HepG2 (cell line): ENCODE measurements at regions of chr17 and their contacts with region 1.

Region 1: DNA sequence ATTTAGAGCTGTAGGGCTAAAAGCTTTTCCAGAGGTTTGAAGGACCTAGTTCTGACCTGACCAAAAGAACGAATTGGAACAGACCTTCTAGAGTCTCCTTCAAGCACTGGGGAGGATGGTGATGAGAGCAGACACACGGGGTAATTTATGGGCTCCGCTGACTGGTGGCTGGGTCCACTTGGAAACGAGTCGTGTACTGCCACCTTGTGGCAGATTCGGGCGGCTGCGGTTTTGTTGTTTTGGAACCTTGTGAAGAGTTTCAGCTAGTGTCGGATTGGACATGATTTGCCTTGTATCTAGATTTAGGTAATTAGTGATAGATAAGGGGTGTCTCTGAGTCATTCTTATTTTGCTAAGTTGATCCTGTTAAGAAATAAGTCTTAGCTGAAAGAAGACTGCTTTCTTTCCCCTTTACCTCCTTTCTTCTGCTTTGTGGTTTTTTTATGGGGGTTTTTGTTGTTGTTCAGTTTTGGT is 98.9 kb downstream of the AATF start:
- DNase-seq: peak; percentile 68
- ATAC-seq: peak; percentile 77
- H3K4me3 ChIP-seq: no peak overlapping the region
- H3K27ac ChIP-seq: no peak overlapping the region
- H3K4me1 ChIP-seq: peaks cover 35% of the 10 kb centered on the region
- H3K27me3 ChIP-seq: no peaks in the 10 kb centered on the region
- CTCF ChIP-seq: peak; percentile 86
- EP300 ChIP-seq: no peak
- POLR2A ChIP-seq: no peak
- RAD21 ChIP-seq: peak; percentile 85

Region 2: GRCh38 chr17:36892112-36892838 is 155.4 kb before region 1 on chr17:
- CTCF ChIA-PET with region 1: interaction called, 3 read pairs
- POLR2A ChIA-PET with region 1: no interaction called
- in situ Hi-C with region 1: loop called (anchors 10 kb)
- intact Hi-C with region 1: loop called (anchors 2 kb)
- DNase-seq: peak; percentile 57
- ATAC-seq: peak; percentile 58
- H3K4me3 ChIP-seq: peak overlapping the region in 1 of 3 experiments; percentile 23; a peak in 2 of 6 replicates
- H3K27ac ChIP-seq: no peak overlapping the region
- H3K4me1 ChIP-seq: peaks cover 20% of the 10 kb centered on the region
- H3K27me3 ChIP-seq: peaks cover 1 to 5% of the 10 kb centered on the region in 2 experiments; a peak in 3 of 5 replicates
- CTCF ChIP-seq: peak; percentile 45
- EP300 ChIP-seq: no peak
- POLR2A ChIP-seq: no peak
- RAD21 ChIP-seq: no peak

Region 3: GRCh38 chr17:36899250-36900159 is 148.2 kb before region 1 on chr17:
- CTCF ChIA-PET with region 1: no interaction called
- POLR2A ChIA-PET with region 1: no interaction called
- in situ Hi-C with region 1: loop called (anchors 10 kb)
- intact Hi-C with region 1: no loop called
- DNase-seq: no peak
- ATAC-seq: no peak
- H3K4me3 ChIP-seq: no peak overlapping the region
- H3K27ac ChIP-seq: no peak overlapping the region
- H3K4me1 ChIP-seq: peaks cover 9% of the 10 kb centered on the region
- H3K27me3 ChIP-seq: 0 out of 5 replicates have a peak, but pooled peaks cover 0 to 3% of the 10 kb centered on the region in 2 experiments
- CTCF ChIP-seq: no peak
- EP300 ChIP-seq: no peak
- POLR2A ChIP-seq: no peak
- RAD21 ChIP-seq: no peak

Region 4: GRCh38 chr17:36950029-36950428 is 97.6 kb before region 1 on chr17:
- CTCF ChIA-PET with region 1: no interaction called
- POLR2A ChIA-PET with region 1: no interaction called
- in situ Hi-C with region 1: no loop called
- intact Hi-C with region 1: loop called (anchors 10 kb)
- DNase-seq: no peak
- ATAC-seq: no peak
- H3K4me3 ChIP-seq: peak overlapping the region; percentile 71 to 88 (median 81)
- H3K27ac ChIP-seq: no peak overlapping the region
- H3K4me1 ChIP-seq: peaks cover 40% of the 10 kb centered on the region
- H3K27me3 ChIP-seq: peaks cover 0 to 31% of the 10 kb centered on the region in 2 experiments; a peak in 4 of 5 replicates
- CTCF ChIP-seq: no peak
- EP300 ChIP-seq: no peak
- POLR2A ChIP-seq: no peak
- RAD21 ChIP-seq: no peak

Region 5: GRCh38 chr17:37062021-37062420 is 14.4 kb after region 1 on chr17:
- CTCF ChIA-PET with region 1: no interaction called
- POLR2A ChIA-PET with region 1: no interaction called
- in situ Hi-C with region 1: no loop called
- intact Hi-C with region 1: no loop called
- DNase-seq: no peak
- ATAC-seq: no peak
- H3K4me3 ChIP-seq: no peak overlapping the region
- H3K27ac ChIP-seq: no peak overlapping the region
- H3K4me1 ChIP-seq: peaks cover 35% of the 10 kb centered on the region
- H3K27me3 ChIP-seq: peaks cover 2 to 26% of the 10 kb centered on the region in 2 experiments; a peak in 3 of 5 replicates
- CTCF ChIP-seq: no peak
- EP300 ChIP-seq: no peak
- POLR2A ChIP-seq: no peak
- RAD21 ChIP-seq: no peak